ENCODE measurements at regions of chr22 and their contacts with region 1.

Region 1: DNA sequence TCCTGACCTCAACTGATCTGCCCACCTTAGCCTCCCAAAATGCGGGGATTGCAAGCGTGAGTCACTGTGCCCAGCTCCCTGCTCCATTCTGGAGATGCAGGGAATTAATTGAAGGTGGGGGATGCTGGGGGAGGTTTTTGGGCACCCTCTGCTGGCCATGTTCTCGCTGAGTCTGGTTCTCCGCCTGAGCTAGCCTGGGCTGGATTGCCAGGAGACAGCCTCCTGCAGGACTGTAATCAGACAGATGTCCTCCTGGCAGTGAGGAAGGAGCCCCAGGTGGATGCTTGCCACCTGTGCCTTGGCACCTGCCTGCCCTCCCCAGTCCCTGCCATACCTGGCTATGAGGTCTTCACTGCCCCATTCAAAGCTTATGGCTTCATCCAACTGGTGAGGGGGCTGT is 5.4 kb downstream of the MTFP1 start:
- DNase-seq: no peak
- H3K4me3 ChIP-seq: no peak overlapping the region
- H3K27ac ChIP-seq: no peak overlapping the region
- H3K4me1 ChIP-seq: no peaks in the 10 kb centered on the region; the same call in 1 of the 2 replicates
- H3K27me3 ChIP-seq: no peaks in the 10 kb centered on the region
- CTCF ChIP-seq: no peak

Region 2: DNA sequence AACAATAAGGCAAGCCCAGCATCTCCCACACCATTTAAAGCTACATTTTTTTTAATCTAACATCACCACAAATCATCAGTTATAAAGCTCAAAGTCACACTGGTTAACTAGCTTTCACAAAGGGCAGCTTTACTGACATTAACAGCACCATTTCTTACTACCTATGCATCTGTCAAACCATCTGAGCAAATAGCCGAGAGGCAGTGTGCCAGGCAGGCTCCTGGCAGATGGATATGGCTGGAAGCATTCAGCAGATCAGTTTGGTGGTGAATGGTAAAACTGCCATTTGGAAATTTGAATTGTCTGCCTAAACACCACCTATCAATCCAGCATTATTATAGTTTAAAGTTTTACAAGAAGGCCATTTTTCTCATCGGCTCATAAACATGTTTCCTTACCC is 1882.5 kb before region 1 on chr22:
- CTCF ChIA-PET with region 1: no interaction called
- POLR2A ChIA-PET with region 1: no interaction called
- intact Hi-C with region 1: no loop called
- DNase-seq: no peak
- H3K4me3 ChIP-seq: no peak overlapping the region
- H3K27ac ChIP-seq: no peak overlapping the region
- H3K4me1 ChIP-seq: peaks cover 21% of the 10 kb centered on the region
- H3K27me3 ChIP-seq: no peaks in the 10 kb centered on the region
- CTCF ChIP-seq: no peak

Region 3: GRCh38 chr22:30396871-30397655 is 33.9 kb before region 1 on chr22 and contains the start of gene SEC14L2:
- CTCF ChIA-PET with region 1: interaction called, 13 read pairs
- POLR2A ChIA-PET with region 1: no interaction called
- intact Hi-C with region 1: no loop called
- DNase-seq: peak; percentile 40 to 64
- H3K4me3 ChIP-seq: peak within 1 kb of the TSS; percentile 69
- H3K27ac ChIP-seq: no peak within 1 kb of the TSS
- H3K4me1 ChIP-seq: peaks cover 32% of the 10 kb centered on the region
- H3K27me3 ChIP-seq: no peaks in the 10 kb centered on the region
- CTCF ChIP-seq: no peak
- total RNA-seq, gene SEC14L2: 51.3 and 60.8 TPM in 2 replicates

Region 4: GRCh38 chr22:30568137-30568805 is 137.3 kb after region 1 on chr22:
- CTCF ChIA-PET with region 1: no interaction called
- POLR2A ChIA-PET with region 1: interaction called, 15 read pairs
- intact Hi-C with region 1: no loop called
- DNase-seq: no peak
- H3K4me3 ChIP-seq: no peak overlapping the region
- H3K27ac ChIP-seq: no peak overlapping the region
- H3K4me1 ChIP-seq: no peaks in the 10 kb centered on the region
- H3K27me3 ChIP-seq: no peaks in the 10 kb centered on the region
- CTCF ChIP-seq: no peak